ENCODE measurements at regions of chr4 and their contacts with region 1.

Region 1: GRCh38 chr4:40515398-40516293 is 114.0 kb downstream of the RBM47 start:
- DNase-seq: peak; percentile 64
- ATAC-seq: peak; percentile 66
- H3K4me3 ChIP-seq: peak overlapping the region; percentile 40 to 58 (median 54)
- H3K27ac ChIP-seq: no peak overlapping the region
- H3K4me1 ChIP-seq: peaks cover 41% of the 10 kb centered on the region
- H3K27me3 ChIP-seq: no peaks in the 10 kb centered on the region; a peak in 1 of 5 replicates
- CTCF ChIP-seq: no peak
- EP300 ChIP-seq: 0 out of 4 replicates have a peak, but pooled peaks of 1 of the 2 experiments have one; percentile 19
- POLR2A ChIP-seq: no peak; a peak in 1 of 4 replicates
- RAD21 ChIP-seq: no peak

Region 2: GRCh38 chr4:40409835-40410234 is 105.8 kb before region 1 on chr4:
- CTCF ChIA-PET with region 1: no interaction called
- POLR2A ChIA-PET with region 1: no interaction called
- in situ Hi-C with region 1: no loop called
- intact Hi-C with region 1: loop called (anchors 10 kb)
- DNase-seq: no peak
- ATAC-seq: no peak
- H3K4me3 ChIP-seq: no peak overlapping the region
- H3K27ac ChIP-seq: no peak overlapping the region
- H3K4me1 ChIP-seq: peaks cover 10% of the 10 kb centered on the region
- H3K27me3 ChIP-seq: no peaks in the 10 kb centered on the region
- CTCF ChIP-seq: no peak
- EP300 ChIP-seq: no peak
- POLR2A ChIP-seq: no peak
- RAD21 ChIP-seq: no peak

Region 3: GRCh38 chr4:40473578-40474388 is 41.9 kb before region 1 on chr4:
- CTCF ChIA-PET with region 1: no interaction called
- POLR2A ChIA-PET with region 1: no interaction called
- in situ Hi-C with region 1: no loop called
- intact Hi-C with region 1: loop called (anchors 5 kb)
- DNase-seq: peak; percentile 87
- ATAC-seq: peak; percentile 99
- H3K4me3 ChIP-seq: peak overlapping the region; percentile 31 to 55 (median 38); a peak in 3 of 6 replicates
- H3K27ac ChIP-seq: peak overlapping the region; percentile 57
- H3K4me1 ChIP-seq: peaks cover 36% of the 10 kb centered on the region
- H3K27me3 ChIP-seq: no peaks in the 10 kb centered on the region; a peak in 2 of 5 replicates
- CTCF ChIP-seq: no peak
- EP300 ChIP-seq: peak in 1 of 2 experiments; percentile 71; a peak in 1 of 4 replicates
- POLR2A ChIP-seq: no peak
- RAD21 ChIP-seq: no peak; the same call in 1 of the 2 replicates